ENCODE measurements at regions of chr3 and their contacts with region 1.

Region 1: DNA sequence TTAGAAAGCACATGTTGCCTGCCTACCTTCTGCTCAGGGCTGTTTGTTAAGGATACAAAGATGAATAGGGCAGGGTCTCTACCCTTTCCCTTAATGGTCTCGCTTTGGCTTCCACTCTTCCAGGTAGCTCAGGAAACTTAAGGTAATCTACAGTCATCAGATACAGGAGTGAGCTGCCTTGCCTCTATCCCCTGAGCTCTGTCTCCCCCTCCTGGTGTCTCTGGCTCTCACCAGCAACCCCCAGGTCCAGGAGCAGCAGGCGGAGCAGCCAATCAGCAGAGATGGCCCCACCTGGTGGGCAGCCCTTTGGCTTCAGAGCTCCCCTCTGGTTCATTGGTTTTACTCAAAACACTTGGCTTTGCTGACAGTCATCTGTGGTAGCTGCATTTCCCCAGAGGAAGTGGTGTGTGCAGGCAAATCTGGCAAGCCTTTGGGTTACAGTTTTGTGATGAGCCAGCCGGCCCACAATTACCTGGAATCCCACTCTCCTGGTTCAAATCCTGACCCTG is 8.5 kb upstream of the CX3CR1 start:
- DNase-seq: peak; percentile 92
- H3K4me3 ChIP-seq: no peak overlapping the region; a peak in 1 of 4 replicates
- H3K27ac ChIP-seq: no peak overlapping the region
- H3K4me1 ChIP-seq: no peaks in the 10 kb centered on the region
- H3K27me3 ChIP-seq: no peaks in the 10 kb centered on the region
- CTCF ChIP-seq: peak; percentile 95
- EP300 ChIP-seq: no peak
- RAD21 ChIP-seq: peak; percentile 98

Region 2: DNA sequence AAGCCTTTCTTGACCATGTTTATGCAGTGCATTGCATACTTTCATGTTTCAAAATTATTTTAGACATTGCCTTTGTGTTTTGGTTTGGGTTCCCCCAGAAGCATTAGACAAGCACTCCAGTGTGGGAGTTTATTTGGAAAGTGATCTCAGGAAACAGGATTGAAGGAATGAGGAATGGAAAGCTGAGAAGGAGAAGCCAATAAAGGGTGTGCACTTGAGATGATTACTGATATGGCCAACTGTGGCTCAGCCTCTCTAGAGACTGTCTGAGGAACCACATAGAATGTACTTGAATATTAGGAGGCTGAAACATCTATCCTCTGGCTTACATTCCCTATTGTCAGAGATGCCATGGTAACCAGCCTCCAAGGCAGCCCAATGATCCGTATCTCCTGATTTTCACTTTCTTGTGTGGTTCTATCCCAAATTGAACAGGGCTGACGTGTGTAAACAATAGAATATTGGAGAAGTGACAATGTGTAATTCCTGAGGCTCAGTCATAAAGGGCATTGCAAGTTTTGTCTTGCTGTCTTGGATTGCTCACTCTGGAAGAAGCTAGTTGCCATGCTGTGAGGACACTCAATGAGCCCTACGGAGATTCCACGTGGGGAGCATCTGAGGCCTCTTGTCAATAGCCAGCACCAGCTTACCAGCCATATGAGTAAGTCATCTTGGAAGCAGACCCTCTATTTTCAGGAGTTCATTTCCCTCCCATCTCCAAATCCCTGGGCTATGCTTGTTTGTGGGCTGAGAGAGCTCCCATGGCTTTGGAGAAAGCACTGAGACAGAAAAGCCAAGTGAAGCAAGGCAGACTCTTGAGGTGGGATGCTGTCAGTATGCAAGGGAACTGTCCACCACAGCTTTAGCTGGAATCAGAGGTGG is 321.3 kb before region 1 on chr3:
- CTCF ChIA-PET with region 1: no interaction called
- POLR2A ChIA-PET with region 1: no interaction called
- DNase-seq: no peak
- H3K4me3 ChIP-seq: no peak overlapping the region
- H3K27ac ChIP-seq: no peak overlapping the region
- H3K4me1 ChIP-seq: no peaks in the 10 kb centered on the region; a peak in 1 of 4 replicates
- H3K27me3 ChIP-seq: no peaks in the 10 kb centered on the region
- CTCF ChIP-seq: no peak
- EP300 ChIP-seq: no peak
- RAD21 ChIP-seq: no peak

Region 3: DNA sequence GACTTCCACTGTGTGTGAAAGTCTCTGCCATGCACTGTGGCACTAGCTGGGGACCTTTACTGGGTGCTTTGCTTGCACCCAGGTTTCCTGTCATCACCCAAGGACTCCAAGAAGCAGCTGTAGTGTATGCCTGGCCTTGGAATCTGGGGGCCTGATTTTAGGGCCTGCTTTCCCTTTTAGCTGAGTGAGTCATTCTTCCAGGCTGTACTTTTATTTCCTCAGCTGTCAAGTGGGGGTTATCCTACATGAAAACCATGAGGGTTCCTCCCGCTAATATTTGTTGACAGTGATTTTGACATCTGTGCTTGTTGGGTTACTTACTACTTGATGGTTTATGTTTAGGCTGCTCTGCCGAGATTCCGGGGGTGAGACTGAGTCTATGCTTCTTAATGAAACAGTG is 199.5 kb before region 1 on chr3:
- CTCF ChIA-PET with region 1: interaction called, 14 read pairs
- POLR2A ChIA-PET with region 1: no interaction called
- DNase-seq: no peak
- H3K4me3 ChIP-seq: no peak overlapping the region
- H3K27ac ChIP-seq: no peak overlapping the region; a peak in 1 of 4 replicates
- H3K4me1 ChIP-seq: no peaks in the 10 kb centered on the region
- H3K27me3 ChIP-seq: no peaks in the 10 kb centered on the region
- CTCF ChIP-seq: no peak
- EP300 ChIP-seq: no peak
- RAD21 ChIP-seq: no peak

Region 4: GRCh38 chr3:39118079-39118478 is 170.3 kb before region 1 on chr3:
- CTCF ChIA-PET with region 1: interaction called, 223 read pairs
- POLR2A ChIA-PET with region 1: no interaction called
- DNase-seq: no peak
- H3K4me3 ChIP-seq: no peak overlapping the region
- H3K27ac ChIP-seq: no peak overlapping the region
- H3K4me1 ChIP-seq: no peaks in the 10 kb centered on the region
- H3K27me3 ChIP-seq: no peaks in the 10 kb centered on the region
- CTCF ChIP-seq: no peak
- EP300 ChIP-seq: no peak
- RAD21 ChIP-seq: no peak

Region 5: DNA sequence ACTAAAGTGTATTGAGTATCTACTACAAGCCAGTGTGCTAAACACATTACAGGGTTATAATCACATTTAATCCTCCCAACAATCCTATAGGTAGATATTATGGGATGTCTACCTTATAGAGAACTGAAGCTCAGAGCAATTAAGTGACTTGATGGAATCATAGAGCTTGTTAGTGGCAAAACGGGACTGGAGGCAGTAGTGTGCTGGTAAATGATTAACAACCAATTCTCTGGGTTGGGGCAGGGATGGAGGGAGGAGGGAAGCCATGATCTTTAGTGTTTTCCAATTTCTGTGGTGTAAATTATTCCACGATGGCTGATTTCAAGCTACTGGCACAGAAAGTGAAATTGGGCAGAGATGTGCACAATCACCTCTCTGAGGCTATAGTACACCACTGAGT is 116.5 kb before region 1 on chr3:
- CTCF ChIA-PET with region 1: interaction called, 14 read pairs
- POLR2A ChIA-PET with region 1: no interaction called
- DNase-seq: no peak
- H3K4me3 ChIP-seq: no peak overlapping the region
- H3K27ac ChIP-seq: no peak overlapping the region
- H3K4me1 ChIP-seq: peaks cover under 1 to 9% of the 10 kb centered on the region in 2 experiments; a peak in 3 of 4 replicates
- H3K27me3 ChIP-seq: no peaks in the 10 kb centered on the region
- CTCF ChIP-seq: no peak
- EP300 ChIP-seq: no peak
- RAD21 ChIP-seq: no peak

Region 6: GRCh38 chr3:39202094-39202493 is 86.3 kb before region 1 on chr3:
- CTCF ChIA-PET with region 1: interaction called, 510 read pairs
- POLR2A ChIA-PET with region 1: no interaction called
- DNase-seq: no peak
- H3K4me3 ChIP-seq: no peak overlapping the region
- H3K27ac ChIP-seq: no peak overlapping the region
- H3K4me1 ChIP-seq: no peaks in the 10 kb centered on the region
- H3K27me3 ChIP-seq: peaks cover 28% of the 10 kb centered on the region; the same call in 1 of the 2 replicates
- CTCF ChIP-seq: no peak
- EP300 ChIP-seq: no peak
- RAD21 ChIP-seq: no peak

Region 7: DNA sequence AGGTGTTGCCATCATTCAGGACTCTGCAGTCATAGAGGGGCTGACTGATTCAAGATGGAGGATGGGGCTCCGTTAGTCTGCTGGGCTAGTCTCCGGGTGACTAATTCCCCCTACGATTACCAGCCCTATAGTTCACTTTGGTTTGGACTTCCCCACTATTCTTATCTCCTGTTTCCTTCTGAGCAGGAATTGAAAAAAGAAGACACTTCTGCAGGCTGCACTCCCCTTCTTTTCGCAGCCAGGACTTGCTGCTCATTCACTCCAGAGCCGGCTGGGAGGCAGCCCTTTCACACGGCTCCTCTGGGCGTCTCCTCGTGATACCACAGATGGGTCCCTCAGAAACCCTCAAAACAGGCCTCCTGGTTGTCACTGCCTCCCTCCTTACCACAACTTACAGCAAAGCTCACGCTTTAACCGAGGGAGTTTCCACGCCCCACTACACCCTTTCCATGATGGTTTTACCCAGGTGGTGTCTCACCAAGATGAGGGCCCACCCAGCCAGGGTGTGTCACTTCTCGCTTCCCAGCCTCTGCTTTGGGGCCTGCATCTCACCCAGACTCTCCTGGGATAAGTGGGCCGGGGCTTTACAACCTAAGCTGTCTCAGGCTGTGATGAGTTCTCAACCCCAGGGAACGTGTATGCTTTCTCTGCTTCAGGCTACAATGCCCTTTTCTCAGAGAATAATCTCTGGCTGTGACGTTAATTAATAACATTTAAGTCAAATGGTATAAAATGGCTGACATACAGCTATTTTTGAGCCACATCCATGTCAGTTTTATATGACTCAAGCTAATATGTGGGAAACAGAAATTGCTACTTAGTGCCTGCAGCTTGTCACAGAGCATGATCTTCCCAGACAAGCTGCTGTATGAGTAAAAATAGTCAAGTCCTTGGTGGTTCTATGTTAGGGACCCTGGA is 20.5 kb before region 1 on chr3:
- CTCF ChIA-PET with region 1: interaction called, 24 read pairs
- POLR2A ChIA-PET with region 1: no interaction called
- DNase-seq: no peak
- H3K4me3 ChIP-seq: no peak overlapping the region
- H3K27ac ChIP-seq: no peak overlapping the region
- H3K4me1 ChIP-seq: peaks cover 0 to 2% of the 10 kb centered on the region in 2 experiments; a peak in 1 of 4 replicates
- H3K27me3 ChIP-seq: peaks cover 14% of the 10 kb centered on the region; the same call in 1 of the 2 replicates
- CTCF ChIP-seq: no peak
- EP300 ChIP-seq: no peak
- RAD21 ChIP-seq: no peak

Measured in SK-N-SH (cell line).